ENCODE measurements at regions of chr11 and their contacts with region 1.

Region 1: GRCh38 chr11:560305-561147 is at the starts of genes LMNTD2 and RASSF7:
- DNase-seq: peak; percentile 95
- ATAC-seq: peak; percentile 97
- H3K4me3 ChIP-seq: peak within 1 kb of the TSS; percentile 15 to 70 (median 66)
- H3K4me3 Mint-ChIP-seq: peak within 1 kb of the TSS; percentile 88
- H3K27ac ChIP-seq: peak within 1 kb of the TSS; percentile 75 to 89
- H3K27ac Mint-ChIP-seq: peak within 1 kb of the TSS; percentile 83
- H3K4me1 ChIP-seq: peaks cover 14 to 29% of the 10 kb centered on the region in 2 donors
- H3K4me1 Mint-ChIP-seq: peaks cover 16% of the 10 kb centered on the region
- H3K27me3 ChIP-seq: peaks cover 0 to 8% (median 2%) of the 10 kb centered on the region in 4 experiments
- H3K27me3 Mint-ChIP-seq: no peaks in the 10 kb centered on the region
- CTCF ChIP-seq: no peak
- total RNA-seq, gene LMNTD2: 19.7 and 21.4 TPM in 2 replicates
- total RNA-seq, gene RASSF7: 24.7 and 29.8 TPM in 2 replicates

Region 2: DNA sequence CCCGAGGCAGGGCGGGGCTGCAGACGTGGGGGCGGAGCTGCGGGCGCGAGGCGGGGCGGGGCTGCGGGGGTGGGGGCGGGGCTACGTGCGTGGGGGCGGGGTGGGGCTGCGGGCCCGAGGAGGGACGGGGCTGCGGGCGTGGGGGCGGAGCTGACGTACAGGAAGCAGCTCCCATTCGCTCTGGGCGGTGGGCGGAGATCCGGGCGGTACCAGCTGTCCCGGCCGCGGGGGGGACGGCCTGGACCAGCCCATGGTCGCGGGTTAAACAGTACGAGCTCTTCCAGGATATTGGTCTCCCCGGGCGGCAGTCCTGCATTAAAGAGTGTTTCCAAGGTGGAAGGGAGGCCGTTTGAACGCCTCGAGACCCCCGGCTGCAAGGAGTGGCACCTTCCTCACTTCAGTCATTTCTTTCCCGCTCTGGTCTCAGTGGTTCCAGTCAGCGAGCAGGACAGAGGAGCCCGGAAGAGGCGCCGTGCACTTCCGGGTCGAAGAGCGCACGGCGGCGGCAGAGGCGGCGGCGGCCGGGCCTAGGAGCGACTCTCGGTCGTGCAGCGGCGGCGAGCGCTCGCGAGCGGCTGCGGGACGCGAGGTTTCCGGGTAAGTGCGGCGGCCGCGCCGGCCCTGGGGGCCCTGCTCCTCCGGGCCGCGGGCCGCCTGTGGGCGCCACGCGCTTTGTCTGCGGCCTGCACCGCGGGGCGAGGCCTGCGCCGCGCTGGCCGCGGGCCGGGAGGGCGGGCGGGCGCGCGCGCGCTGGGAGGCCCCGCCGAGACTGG is 15.7 kb after region 1 on chr11 and contains the start of gene PHRF1:
- CTCF ChIA-PET with region 1: interaction called, 3 read pairs
- POLR2A ChIA-PET with region 1: interaction called, 18 read pairs
- intact Hi-C with region 1: loop called (anchors 1 kb)
- DNase-seq: peak; percentile 98
- ATAC-seq: peak; percentile 87
- H3K4me3 ChIP-seq: peak within 1 kb of the TSS; percentile 65 to 95 (median 86)
- H3K4me3 Mint-ChIP-seq: peak within 1 kb of the TSS; percentile 93
- H3K27ac ChIP-seq: peak within 1 kb of the TSS; percentile 97 to 98
- H3K27ac Mint-ChIP-seq: peak within 1 kb of the TSS; percentile 99
- H3K4me1 ChIP-seq: peaks cover 30 to 44% of the 10 kb centered on the region in 2 donors
- H3K4me1 Mint-ChIP-seq: peaks cover 44% of the 10 kb centered on the region
- H3K27me3 ChIP-seq: peaks cover 0 to 18% (median 8%) of the 10 kb centered on the region in 4 experiments
- H3K27me3 Mint-ChIP-seq: peaks cover 15% of the 10 kb centered on the region
- CTCF ChIP-seq: no peak
- total RNA-seq, gene PHRF1: 57.9 and 63.5 TPM in 2 replicates